Psoas muscle (tissue), 8 donors: ENCODE measurements at regions of chr4 and their contacts with region 1.

Region 1: DNA sequence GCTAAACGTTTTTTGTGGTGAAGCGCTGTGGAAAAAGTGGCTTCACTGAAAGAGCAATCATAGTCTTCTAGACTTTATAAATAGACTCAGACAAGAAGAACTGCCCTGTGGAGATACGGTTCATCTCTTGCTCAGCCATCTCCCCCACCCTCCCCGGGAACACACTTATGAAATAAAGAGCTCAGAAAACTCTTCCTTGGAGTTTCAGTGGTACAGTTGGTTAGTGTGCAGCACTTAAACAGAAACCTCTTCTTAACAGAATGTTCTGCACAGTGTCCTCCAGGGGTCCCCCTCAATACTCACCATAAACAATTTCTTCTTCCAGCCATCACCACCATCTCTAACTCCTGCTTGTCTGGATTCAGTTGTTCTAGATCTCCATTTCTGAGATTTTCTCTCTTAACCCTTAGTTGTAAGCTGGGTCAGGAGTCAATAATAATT is 313.0 kb downstream of the ARHGAP10 start:
- DNase-seq: no peak
- ATAC-seq: peak; percentile 40 to 65 (median 56)
- H3K4me3 ChIP-seq: peak overlapping the region; percentile 59
- H3K27ac ChIP-seq: peak overlapping the region; percentile 93
- H3K4me1 ChIP-seq: peaks cover 40% of the 10 kb centered on the region
- H3K27me3 ChIP-seq: no peaks in the 10 kb centered on the region
- CTCF ChIP-seq: no peak

Region 2: DNA sequence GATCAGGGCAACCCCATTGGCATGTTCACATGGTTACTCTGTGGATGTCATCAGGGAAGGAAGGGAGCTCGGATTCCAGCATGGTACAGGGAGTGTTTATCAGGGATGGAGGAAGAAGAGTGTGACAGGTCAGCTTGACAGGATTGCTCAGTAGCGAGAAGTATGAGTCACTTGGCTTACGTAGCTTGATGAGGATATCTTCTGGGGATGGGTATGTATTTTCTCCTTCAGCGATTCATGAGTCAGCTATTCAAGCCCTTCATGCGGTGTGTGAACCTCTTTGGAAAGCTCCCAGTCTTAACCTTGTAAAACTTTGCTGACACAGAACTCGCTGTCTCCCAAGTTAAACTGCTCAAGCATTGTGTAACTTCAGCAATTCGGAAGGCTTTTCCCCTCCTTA is 37.6 kb before region 1 on chr4:
- intact Hi-C with region 1: loop called in 1 of 2 experiments (anchors 1 kb)
- DNase-seq: no peak
- ATAC-seq: peak; percentile 93 to 99 (median 94)
- H3K4me3 ChIP-seq: peak overlapping the region; percentile 34
- H3K27ac ChIP-seq: peak overlapping the region; percentile 84
- H3K4me1 ChIP-seq: peaks cover 56% of the 10 kb centered on the region
- H3K27me3 ChIP-seq: no peaks in the 10 kb centered on the region
- CTCF ChIP-seq: no peak

Region 3: DNA sequence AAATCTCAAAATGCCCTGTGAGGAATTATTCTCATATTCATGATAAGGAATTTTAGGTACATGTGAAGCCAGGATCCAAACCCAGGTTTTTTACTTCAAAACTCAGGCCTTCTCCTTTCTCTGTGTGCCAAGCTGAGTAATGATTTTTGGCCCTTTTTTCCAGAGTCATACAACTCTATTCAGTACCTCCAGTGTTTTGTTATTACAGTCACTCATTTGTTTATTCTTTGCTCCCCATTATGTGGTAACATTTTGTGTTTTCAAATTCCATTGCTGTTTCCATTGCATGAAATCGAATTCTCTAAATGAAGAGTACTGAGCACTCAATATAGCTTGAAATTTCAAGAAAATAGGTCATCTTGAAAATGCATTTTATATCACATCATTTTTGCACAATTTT is 81.9 kb after region 1 on chr4:
- intact Hi-C with region 1: no loop called
- DNase-seq: no peak
- ATAC-seq: no peak
- H3K4me3 ChIP-seq: no peak overlapping the region
- H3K27ac ChIP-seq: no peak overlapping the region
- H3K4me1 ChIP-seq: no peaks in the 10 kb centered on the region
- H3K27me3 ChIP-seq: no peaks in the 10 kb centered on the region
- CTCF ChIP-seq: no peak